Naive thymus-derived CD4-positive, alpha-beta T cell (primary cell): ENCODE measurements at regions of chr9 and their contacts with region 1.

Region 1: DNA sequence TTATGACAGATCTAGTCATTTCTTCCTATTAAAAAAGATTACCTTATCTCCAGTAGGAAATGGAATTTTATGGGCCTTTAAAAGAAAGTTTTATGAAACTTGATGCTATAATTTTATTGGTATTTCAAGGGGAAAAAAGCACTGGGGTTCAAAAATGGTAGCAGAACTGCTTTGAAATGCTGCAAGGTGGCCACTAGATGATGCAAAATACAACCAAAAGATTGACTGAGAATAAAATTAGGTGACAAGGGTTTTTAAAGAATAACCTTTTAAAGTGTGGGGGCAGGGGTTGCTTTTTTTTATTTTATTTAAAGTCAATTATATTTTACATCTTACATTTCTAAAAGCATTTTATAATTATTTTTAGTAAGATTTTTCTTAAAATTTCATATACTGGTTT is 61.7 kb downstream of the KLF9 start:
- DNase-seq: peak in 6 of 9 donors; percentile 9 to 46 (median 30)
- ATAC-seq: no peak
- H3K4me3 ChIP-seq: no peak overlapping the region
- H3K4me3 Mint-ChIP-seq: no peak overlapping the region
- H3K27ac ChIP-seq: no peak overlapping the region
- H3K27ac Mint-ChIP-seq: peak overlapping the region in 2 of 9 donors; percentile 9 to 16
- H3K4me1 ChIP-seq: no peaks in the 10 kb centered on the region
- H3K4me1 Mint-ChIP-seq: peaks cover 0 to 9% (median 0%) of the 10 kb centered on the region in 7 donors
- H3K27me3 ChIP-seq: no peaks in the 10 kb centered on the region
- H3K27me3 Mint-ChIP-seq: no peaks in the 10 kb centered on the region

Region 2: GRCh38 chr9:69542942-69543704 is 809.7 kb before region 1 on chr9:
- CTCF ChIA-PET with region 1: no interaction called
- POLR2A ChIA-PET with region 1: no interaction called
- intact Hi-C with region 1: no loop called
- DNase-seq: no peak
- ATAC-seq: no peak
- H3K4me3 ChIP-seq: no peak overlapping the region
- H3K4me3 Mint-ChIP-seq: no peak overlapping the region
- H3K27ac ChIP-seq: no peak overlapping the region
- H3K27ac Mint-ChIP-seq: no peak overlapping the region
- H3K4me1 ChIP-seq: no peaks in the 10 kb centered on the region
- H3K4me1 Mint-ChIP-seq: no peaks in the 10 kb centered on the region
- H3K27me3 ChIP-seq: no peaks in the 10 kb centered on the region
- H3K27me3 Mint-ChIP-seq: peaks cover 5 to 16% (median 10%) of the 10 kb centered on the region in 5 donors

Region 3: GRCh38 chr9:69971643-69972449 is 381.0 kb before region 1 on chr9:
- CTCF ChIA-PET with region 1: no interaction called
- POLR2A ChIA-PET with region 1: no interaction called
- intact Hi-C with region 1: loop called in 1 of 2 experiments (anchors 5 kb)
- DNase-seq: peak in 7 of 9 donors; percentile 18 to 37 (median 27)
- ATAC-seq: peak; percentile 52
- H3K4me3 ChIP-seq: no peak overlapping the region
- H3K4me3 Mint-ChIP-seq: no peak overlapping the region
- H3K27ac ChIP-seq: no peak overlapping the region
- H3K27ac Mint-ChIP-seq: no peak overlapping the region
- H3K4me1 ChIP-seq: no peaks in the 10 kb centered on the region
- H3K4me1 Mint-ChIP-seq: peaks cover 0 to 4% (median 0%) of the 10 kb centered on the region in 7 donors
- H3K27me3 ChIP-seq: no peaks in the 10 kb centered on the region
- H3K27me3 Mint-ChIP-seq: peaks cover 5 to 19% (median 15%) of the 10 kb centered on the region in 5 donors

Region 4: GRCh38 chr9:70318002-70318401 is 34.8 kb before region 1 on chr9:
- CTCF ChIA-PET with region 1: no interaction called
- POLR2A ChIA-PET with region 1: no interaction called
- intact Hi-C with region 1: no loop called
- DNase-seq: no peak
- ATAC-seq: no peak
- H3K4me3 ChIP-seq: no peak overlapping the region
- H3K4me3 Mint-ChIP-seq: no peak overlapping the region
- H3K27ac ChIP-seq: no peak overlapping the region
- H3K27ac Mint-ChIP-seq: no peak overlapping the region
- H3K4me1 ChIP-seq: no peaks in the 10 kb centered on the region
- H3K4me1 Mint-ChIP-seq: peaks cover 0 to 8% (median 0%) of the 10 kb centered on the region in 7 donors
- H3K27me3 ChIP-seq: no peaks in the 10 kb centered on the region
- H3K27me3 Mint-ChIP-seq: no peaks in the 10 kb centered on the region

Region 5: DNA sequence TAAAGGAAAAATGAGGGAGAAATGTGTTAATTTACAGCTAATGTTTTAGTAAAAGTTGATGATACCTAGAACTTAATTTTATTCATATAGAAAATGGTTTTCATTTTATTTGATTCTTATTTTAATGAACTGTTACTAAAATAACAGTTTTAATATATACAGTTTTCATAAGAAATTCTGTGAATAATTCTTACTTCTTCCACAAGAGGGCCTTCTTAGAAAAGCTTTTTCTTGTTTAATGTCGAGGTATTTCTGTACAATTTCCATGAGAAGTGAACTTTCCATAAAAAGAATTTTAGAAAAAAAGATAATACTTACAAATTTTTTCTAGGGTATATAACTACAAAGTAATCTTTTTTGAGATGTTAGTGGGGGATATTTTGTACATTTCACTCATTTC is 12.2 kb before region 1 on chr9:
- CTCF ChIA-PET with region 1: interaction called, 7 read pairs
- POLR2A ChIA-PET with region 1: interaction called, 3 read pairs
- intact Hi-C with region 1: loop called in 1 of 2 experiments (anchors 1 kb)
- DNase-seq: peak in 5 of 9 donors; percentile 8 to 36 (median 24)
- ATAC-seq: no peak
- H3K4me3 ChIP-seq: no peak overlapping the region
- H3K4me3 Mint-ChIP-seq: no peak overlapping the region
- H3K27ac ChIP-seq: no peak overlapping the region
- H3K27ac Mint-ChIP-seq: no peak overlapping the region
- H3K4me1 ChIP-seq: no peaks in the 10 kb centered on the region
- H3K4me1 Mint-ChIP-seq: peaks cover 0 to 12% (median 4%) of the 10 kb centered on the region in 7 donors
- H3K27me3 ChIP-seq: no peaks in the 10 kb centered on the region
- H3K27me3 Mint-ChIP-seq: no peaks in the 10 kb centered on the region

Region 6: DNA sequence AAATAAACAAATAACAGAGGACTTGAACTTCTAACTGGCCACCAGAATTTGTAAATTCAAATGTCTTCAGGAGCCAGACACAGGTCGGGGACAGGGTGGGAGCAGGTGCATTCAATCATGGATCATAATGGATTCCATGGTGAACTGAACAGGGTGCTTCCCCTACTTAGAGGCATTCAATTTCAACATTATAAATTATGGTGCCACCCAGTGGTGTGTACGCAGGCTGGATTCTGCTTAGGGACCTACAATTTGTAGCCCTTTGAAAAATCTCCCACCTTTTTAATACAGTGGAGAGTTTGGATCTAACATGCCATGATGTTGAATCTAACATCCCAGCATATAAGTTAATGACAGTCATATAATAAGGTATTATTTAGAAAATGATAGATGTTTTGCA is 39.4 kb after region 1 on chr9:
- CTCF ChIA-PET with region 1: interaction called, 3 read pairs
- POLR2A ChIA-PET with region 1: no interaction called
- intact Hi-C with region 1: loop called in 1 of 2 experiments (anchors 5 kb)
- DNase-seq: no peak
- ATAC-seq: peak; percentile 64
- H3K4me3 ChIP-seq: no peak overlapping the region
- H3K4me3 Mint-ChIP-seq: peak overlapping the region in 8 of 10 donors; percentile 20 to 72 (median 46)
- H3K27ac ChIP-seq: no peak overlapping the region
- H3K27ac Mint-ChIP-seq: peak overlapping the region in 5 of 9 donors; percentile 4 to 76 (median 41)
- H3K4me1 ChIP-seq: peaks cover 13 to 64% of the 10 kb centered on the region in 2 donors
- H3K4me1 Mint-ChIP-seq: peaks cover 48 to 98% (median 88%) of the 10 kb centered on the region in 7 donors
- H3K27me3 ChIP-seq: no peaks in the 10 kb centered on the region
- H3K27me3 Mint-ChIP-seq: no peaks in the 10 kb centered on the region

Region 7: GRCh38 chr9:70419546-70420266 is 66.9 kb after region 1 on chr9:
- CTCF ChIA-PET with region 1: interaction called, 3 read pairs
- POLR2A ChIA-PET with region 1: interaction called, 3 read pairs
- intact Hi-C with region 1: loop called in 1 of 2 experiments (anchors 2 kb)
- DNase-seq: peak; percentile 69 to 92 (median 83)
- ATAC-seq: peak; percentile 69
- H3K4me3 ChIP-seq: peak overlapping the region; percentile 69
- H3K4me3 Mint-ChIP-seq: peak overlapping the region; percentile 87 to 99 (median 95)
- H3K27ac ChIP-seq: peak overlapping the region; percentile 92
- H3K27ac Mint-ChIP-seq: peak overlapping the region; percentile 75 to 100 (median 99)
- H3K4me1 ChIP-seq: peaks cover 38 to 43% of the 10 kb centered on the region in 2 donors
- H3K4me1 Mint-ChIP-seq: peaks cover 22 to 66% (median 42%) of the 10 kb centered on the region in 7 donors
- H3K27me3 ChIP-seq: no peaks in the 10 kb centered on the region
- H3K27me3 Mint-ChIP-seq: peaks cover 0 to 2% (median 0%) of the 10 kb centered on the region in 5 donors

Region 8: GRCh38 chr9:70484210-70485130 is 131.7 kb after region 1 on chr9:
- CTCF ChIA-PET with region 1: interaction called, 7 read pairs
- POLR2A ChIA-PET with region 1: interaction called, 4 read pairs
- intact Hi-C with region 1: loop called (anchors 1 to 5 kb)
- DNase-seq: peak in 6 of 9 donors; percentile 13 to 38 (median 32)
- ATAC-seq: peak; percentile 85
- H3K4me3 ChIP-seq: no peak overlapping the region
- H3K4me3 Mint-ChIP-seq: no peak overlapping the region
- H3K27ac ChIP-seq: no peak overlapping the region
- H3K27ac Mint-ChIP-seq: peak overlapping the region in 1 of 9 donors; percentile 36
- H3K4me1 ChIP-seq: no peaks in the 10 kb centered on the region
- H3K4me1 Mint-ChIP-seq: peaks cover 4 to 26% (median 13%) of the 10 kb centered on the region in 7 donors
- H3K27me3 ChIP-seq: no peaks in the 10 kb centered on the region
- H3K27me3 Mint-ChIP-seq: peaks cover 0 to 10% (median 0%) of the 10 kb centered on the region in 5 donors